Ascending aorta (tissue), 2 donors: ENCODE measurements at regions of chr2 and their contacts with region 1.

Region 1: GRCh38 chr2:218269899-218270720 is at the starts of genes AAMP and PNKD:
- DNase-seq: peak; percentile 99 to 100
- H3K4me3 ChIP-seq: peak within 1 kb of the TSS; percentile 79 to 85
- H3K27ac ChIP-seq: peak within 1 kb of the TSS; percentile 73 to 80
- H3K4me1 ChIP-seq: peaks cover 12 to 35% of the 10 kb centered on the region in 2 donors
- H3K27me3 ChIP-seq: no peaks in the 10 kb centered on the region
- CTCF ChIP-seq: peak in 1 of 3 experiments; percentile 44
- total RNA-seq, gene AAMP: 73.7 TPM
- total RNA-seq, gene PNKD: 45.8 TPM

Region 2: DNA sequence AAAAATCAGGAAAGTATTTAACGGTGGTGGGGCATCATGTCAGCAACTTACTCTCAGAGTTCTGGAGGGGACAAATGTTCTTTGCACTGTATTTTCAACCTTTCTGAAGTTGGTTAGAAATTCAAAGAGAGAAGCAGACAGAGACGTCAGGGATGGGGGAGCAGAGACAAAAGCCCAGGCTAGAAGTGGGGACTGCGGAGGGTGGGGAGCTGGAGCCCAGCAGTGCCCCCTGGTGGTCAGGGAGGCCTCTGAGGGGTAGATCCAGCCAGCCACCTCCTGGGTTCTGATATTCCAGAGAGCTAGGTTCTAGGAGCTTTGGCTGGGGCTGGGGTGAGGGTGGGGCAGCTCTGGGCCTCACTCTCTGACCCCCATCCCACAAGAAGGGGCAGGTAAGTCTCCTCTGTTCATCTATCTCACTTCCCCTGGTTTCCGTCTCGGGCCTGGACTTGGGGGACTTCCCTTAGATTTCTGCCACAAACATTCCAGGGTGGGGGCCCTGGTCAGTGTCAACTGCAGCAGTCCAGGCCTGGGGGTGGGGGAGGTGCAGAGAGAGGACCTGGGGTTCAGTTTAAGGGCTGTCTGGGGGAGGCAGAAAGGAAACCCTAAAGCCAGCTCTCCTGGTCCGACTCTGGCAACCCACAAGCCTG is 276.2 kb before region 1 on chr2:
- intact Hi-C with region 1: no loop called
- DNase-seq: peak in 1 of 2 donors; percentile 88
- H3K4me3 ChIP-seq: peak overlapping the region in 1 of 2 donors; percentile 3
- H3K27ac ChIP-seq: peak overlapping the region; percentile 59 to 69
- H3K4me1 ChIP-seq: peaks cover 21 to 50% of the 10 kb centered on the region in 2 donors
- H3K27me3 ChIP-seq: no peaks in the 10 kb centered on the region
- CTCF ChIP-seq: peak; percentile 48 to 80 (median 76)

Region 3: DNA sequence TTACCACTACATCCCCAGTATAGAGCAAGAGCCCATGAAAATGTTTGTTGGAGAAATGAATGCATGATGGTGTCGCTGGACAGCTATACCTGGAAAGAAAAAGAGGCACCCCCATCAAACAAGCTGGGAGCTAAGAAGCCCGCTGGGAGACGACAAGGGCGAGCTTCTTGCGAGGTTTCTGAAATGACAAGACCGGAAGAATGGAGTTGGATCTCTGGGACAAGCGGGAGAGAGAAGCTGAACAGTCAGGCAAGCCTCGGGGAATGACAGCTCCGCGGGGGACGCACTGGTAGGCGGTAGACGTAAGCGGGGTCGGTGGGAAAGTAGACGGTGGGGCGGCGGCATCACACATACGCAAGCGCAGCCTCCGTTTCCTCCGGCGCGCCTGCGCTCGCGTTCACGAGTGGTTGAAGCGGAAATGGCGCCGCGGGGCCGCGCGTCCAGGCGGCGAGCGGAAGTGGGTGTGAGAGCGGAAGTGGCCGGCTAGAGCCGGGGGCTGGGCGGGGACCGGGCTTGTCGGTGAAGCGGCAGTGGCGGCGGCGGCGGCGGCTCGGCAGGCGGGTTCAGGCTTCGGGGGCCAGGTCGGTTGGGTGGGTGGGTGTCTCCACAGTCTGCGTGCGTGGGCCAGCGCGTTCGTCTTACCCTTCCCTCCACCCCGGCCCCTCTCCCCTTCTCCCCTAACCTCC is 53.3 kb before region 1 on chr2 and contains the start of gene ARPC2:
- intact Hi-C with region 1: loop called (anchors 5 kb)
- DNase-seq: peak; percentile 75 to 97
- H3K4me3 ChIP-seq: peak within 1 kb of the TSS; percentile 96
- H3K27ac ChIP-seq: peak within 1 kb of the TSS; percentile 97 to 98
- H3K4me1 ChIP-seq: peaks cover 19 to 35% of the 10 kb centered on the region in 2 donors
- H3K27me3 ChIP-seq: no peaks in the 10 kb centered on the region
- CTCF ChIP-seq: peak in 1 of 3 experiments; percentile 22
- total RNA-seq, gene ARPC2: 237 TPM

Region 4: GRCh38 chr2:218257390-218257981 is 12.6 kb before region 1 on chr2:
- intact Hi-C with region 1: no loop called
- DNase-seq: no peak
- H3K4me3 ChIP-seq: no peak overlapping the region
- H3K27ac ChIP-seq: peak overlapping the region; percentile 25 to 58
- H3K4me1 ChIP-seq: peaks cover 8 to 26% of the 10 kb centered on the region in 2 donors
- H3K27me3 ChIP-seq: no peaks in the 10 kb centered on the region
- CTCF ChIP-seq: peak; percentile 27 to 58 (median 51)

Region 5: GRCh38 chr2:218301176-218301819 is 31.2 kb after region 1 on chr2:
- intact Hi-C with region 1: loop called (anchors 1 kb)
- DNase-seq: peak in 1 of 2 donors; percentile 94
- H3K4me3 ChIP-seq: no peak overlapping the region
- H3K27ac ChIP-seq: peak overlapping the region in 1 of 2 donors; percentile 4
- H3K4me1 ChIP-seq: peaks cover 0 to 21% of the 10 kb centered on the region in 2 donors
- H3K27me3 ChIP-seq: no peaks in the 10 kb centered on the region
- CTCF ChIP-seq: peak; percentile 94 to 96 (median 95)

Region 6: GRCh38 chr2:218343591-218343990 is 73.5 kb after region 1 on chr2:
- intact Hi-C with region 1: no loop called
- DNase-seq: peak in 1 of 2 donors; percentile 90
- H3K4me3 ChIP-seq: no peak overlapping the region
- H3K27ac ChIP-seq: peak overlapping the region; percentile 86 to 96
- H3K4me1 ChIP-seq: peaks cover 17 to 33% of the 10 kb centered on the region in 2 donors
- H3K27me3 ChIP-seq: no peaks in the 10 kb centered on the region
- CTCF ChIP-seq: peak in 1 of 3 experiments; percentile 22

Region 7: DNA sequence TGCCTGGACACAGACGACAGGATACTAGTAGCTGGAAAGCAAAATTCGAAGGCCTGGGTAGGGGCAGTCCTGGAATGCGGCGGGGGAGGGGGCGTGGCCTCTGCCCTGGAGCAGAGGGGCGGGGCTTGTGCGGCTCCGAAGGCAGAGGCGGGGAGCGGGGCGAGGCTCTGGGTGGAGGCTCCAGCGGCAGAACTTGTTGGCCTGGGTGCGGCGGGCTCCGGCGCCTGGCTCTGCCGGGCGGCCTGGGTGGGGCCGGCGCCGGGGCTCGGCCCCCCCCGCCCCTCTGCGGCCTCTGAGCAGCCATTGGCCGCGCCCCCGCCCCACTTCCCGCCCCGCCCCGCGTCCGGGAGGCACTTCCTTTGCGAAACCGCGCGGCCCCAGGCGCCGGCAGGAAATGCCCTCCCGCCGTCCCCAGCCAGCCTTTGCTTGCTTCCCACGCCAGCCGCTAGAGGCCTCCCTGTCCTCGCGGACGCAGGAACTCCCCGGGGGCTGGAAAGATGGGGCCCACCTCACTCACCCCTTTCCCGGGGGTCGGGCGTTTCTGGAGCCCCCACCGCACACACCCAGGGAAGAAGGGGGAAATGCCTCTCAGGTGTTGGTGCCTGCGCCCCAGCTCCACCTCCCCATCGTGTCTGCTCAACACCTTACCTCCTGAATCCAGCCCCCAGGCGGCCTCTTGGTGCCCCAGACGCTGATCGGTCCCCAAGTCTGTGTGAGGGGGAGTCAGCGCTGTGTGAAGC is 136.3 kb after region 1 on chr2:
- intact Hi-C with region 1: loop called (anchors 1 kb)
- DNase-seq: peak; percentile 85 to 97
- H3K4me3 ChIP-seq: peak overlapping the region; percentile 56 to 65
- H3K27ac ChIP-seq: peak overlapping the region; percentile 88 to 94
- H3K4me1 ChIP-seq: peaks cover 8 to 42% of the 10 kb centered on the region in 2 donors
- H3K27me3 ChIP-seq: no peaks in the 10 kb centered on the region
- CTCF ChIP-seq: peak; percentile 84 to 87 (median 87)

Region 8: GRCh38 chr2:218568190-218569037 is 298.3 kb after region 1 on chr2 and contains the starts of genes CNOT9 and USP37:
- intact Hi-C with region 1: loop called (anchors 5 kb)
- DNase-seq: peak; percentile 96 to 100
- H3K4me3 ChIP-seq: peak within 1 kb of the TSS; percentile 75 to 89
- H3K27ac ChIP-seq: peak within 1 kb of the TSS; percentile 91 to 95
- H3K4me1 ChIP-seq: peaks cover 5 to 26% of the 10 kb centered on the region in 2 donors
- H3K27me3 ChIP-seq: no peaks in the 10 kb centered on the region
- CTCF ChIP-seq: no peak
- total RNA-seq, gene CNOT9: 46.7 TPM
- total RNA-seq, gene USP37: 11.8 TPM